ENCODE measurements at regions of chr12 and their contacts with region 1.

Region 1: GRCh38 chr12:130871286-130872178 is at the start of gene RAN:
- DNase-seq: peak; percentile 71 to 98 (median 88)

Region 2: DNA sequence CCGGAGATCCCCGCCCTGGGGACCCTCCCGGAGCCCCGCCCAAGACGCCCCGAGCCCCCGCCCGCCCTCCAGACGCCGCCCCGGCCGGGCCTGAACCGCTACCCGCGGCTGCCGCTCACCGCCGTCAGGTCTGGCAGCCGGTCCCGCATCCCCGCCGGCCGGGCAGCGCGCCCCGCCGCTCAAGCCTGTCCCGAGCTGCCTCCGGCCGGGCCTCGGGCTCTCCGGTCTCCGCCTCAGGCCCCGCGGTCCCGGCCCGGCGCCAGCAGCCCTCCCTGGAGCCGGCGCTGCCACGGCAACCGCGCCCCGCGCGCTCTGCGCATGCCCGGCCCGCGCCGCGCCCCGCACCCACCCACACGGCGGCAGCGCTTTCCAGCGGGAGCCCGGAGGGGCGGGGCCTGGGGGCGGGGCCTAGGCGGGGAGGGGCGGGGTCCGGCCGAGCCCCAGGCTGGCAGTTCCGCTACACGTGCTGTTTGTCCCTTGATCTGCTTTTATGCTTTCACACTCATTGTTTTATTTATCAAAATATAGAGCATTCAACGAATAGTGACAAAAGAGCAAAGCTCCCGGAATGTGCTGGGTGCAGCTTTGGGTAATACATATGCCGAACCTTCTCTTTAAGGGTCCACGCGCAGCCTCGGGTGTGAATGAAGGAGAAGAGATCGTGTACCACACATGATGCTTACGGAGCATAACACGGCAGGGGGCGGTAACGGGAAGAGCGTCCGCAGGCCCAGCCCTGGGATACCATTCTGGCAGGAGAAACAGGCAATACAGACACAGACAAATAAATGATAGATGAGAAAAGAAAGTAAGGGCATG is 32.4 kb before region 1 on chr12 and contains the start of gene STX2:
- intact Hi-C with region 1: loop called (anchors 1 kb)
- DNase-seq: peak; percentile 79 to 99 (median 88)

Measured in posterior cingulate gyrus (tissue), 11 donors.